Right ventricle myocardium inferior (tissue), 1 donor: ENCODE measurements at regions of chr5 and their contacts with region 1.

Region 1: DNA sequence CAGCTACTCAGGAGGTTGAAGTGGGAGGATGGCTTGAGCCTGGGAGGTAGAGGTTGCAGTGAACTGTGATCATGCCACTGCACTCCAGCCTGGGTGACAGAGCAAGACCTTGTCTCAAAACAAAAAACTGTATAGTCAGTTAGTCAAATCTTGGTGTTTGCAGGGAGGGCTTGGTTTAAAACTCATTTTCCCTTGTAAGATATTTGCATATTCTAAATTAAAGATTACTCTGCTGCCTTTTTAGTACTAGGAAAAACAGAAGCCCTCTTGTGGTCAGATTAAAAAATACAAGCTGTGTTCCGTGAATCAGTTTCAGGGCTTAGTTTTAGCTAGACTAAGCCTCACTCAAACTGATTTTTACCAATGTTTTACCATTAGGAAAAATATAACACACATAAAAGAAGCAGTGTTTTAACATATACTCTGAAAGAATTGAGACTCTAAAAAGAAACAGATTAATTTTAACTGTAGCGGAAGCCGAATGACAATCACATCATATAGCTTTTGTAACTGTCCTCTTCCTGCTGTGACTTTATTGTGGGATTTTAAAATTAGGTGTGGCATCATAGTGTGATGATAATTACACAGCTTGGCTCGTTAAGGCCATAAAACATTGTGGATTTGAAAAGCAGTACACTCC is 84.9 kb upstream of the BASP1 start:
- DNase-seq: no peak
- ATAC-seq: no peak

Region 2: GRCh38 chr5:16791036-16791705 is 341.4 kb before region 1 on chr5:
- intact Hi-C with region 1: loop called (anchors 2 kb)
- DNase-seq: no peak
- ATAC-seq: no peak

Region 3: GRCh38 chr5:17169507-17169906 is 36.9 kb after region 1 on chr5:
- intact Hi-C with region 1: no loop called
- DNase-seq: no peak
- ATAC-seq: peak; percentile 46

Region 4: GRCh38 chr5:17189381-17190036 is 56.9 kb after region 1 on chr5:
- intact Hi-C with region 1: loop called (anchors 5 kb)
- DNase-seq: peak; percentile 81
- ATAC-seq: peak; percentile 51